IMR-90 (cell line): ENCODE measurements at regions of chr16 and their contacts with region 1.

Region 1: DNA sequence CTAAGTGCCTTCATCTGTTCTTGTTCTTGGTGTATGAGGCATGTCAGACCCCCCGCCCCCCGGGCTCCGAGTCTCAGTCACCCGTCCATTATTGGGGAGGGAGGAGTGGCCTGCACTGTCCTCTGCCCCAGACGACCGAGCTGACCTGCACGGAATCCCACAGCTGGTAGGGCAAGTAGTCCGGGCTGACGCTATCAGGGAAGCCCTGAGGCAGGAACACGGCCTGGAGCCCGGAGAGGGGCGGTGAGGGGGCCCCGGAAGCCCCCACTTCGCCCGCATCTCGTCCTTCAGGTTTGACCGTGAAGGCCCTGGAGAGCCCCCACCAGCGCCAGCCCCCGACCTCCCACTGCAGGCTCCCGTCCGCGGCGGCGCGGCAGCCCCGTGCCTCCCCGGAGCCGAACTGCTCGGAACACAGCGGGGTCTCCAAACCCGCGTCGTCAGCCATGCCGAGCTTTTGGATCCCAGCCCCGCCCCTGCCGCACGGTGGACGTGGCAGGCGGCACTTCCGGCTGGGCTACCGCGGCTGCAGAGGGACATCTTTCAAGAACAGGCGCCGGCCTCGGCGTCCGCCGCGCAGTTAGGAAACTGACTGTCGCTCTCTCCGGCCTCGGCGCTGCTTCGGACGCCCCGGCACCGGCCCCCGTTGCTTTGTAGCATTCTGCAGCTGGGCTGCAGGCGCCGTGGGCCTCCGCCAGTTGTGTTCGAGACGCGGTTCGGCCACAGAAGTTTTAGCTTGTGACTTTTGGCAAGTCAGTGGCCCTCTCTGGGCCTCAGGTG is at the start of gene RUSF1:
- DNase-seq: peak; percentile 87
- ATAC-seq: peak; percentile 93
- H3K4me3 ChIP-seq: peak within 1 kb of the TSS; percentile 94
- H3K27ac ChIP-seq: peak within 1 kb of the TSS; percentile 99
- H3K4me1 ChIP-seq: peaks cover 5% of the 10 kb centered on the region
- H3K27me3 ChIP-seq: no peaks in the 10 kb centered on the region
- CTCF ChIP-seq: no peak
- POLR2A ChIP-seq: peak; percentile 94
- RAD21 ChIP-seq: no peak
- total RNA-seq, gene RUSF1: 22.2 and 22.9 TPM in 2 replicates

Region 2: GRCh38 chr16:30458561-30459394 is 1049.3 kb before region 1 on chr16:
- CTCF ChIA-PET with region 1: no interaction called
- POLR2A ChIA-PET with region 1: no interaction called
- dilution Hi-C with region 1: no loop called
- in situ Hi-C with region 1: no loop called
- intact Hi-C with region 1: no loop called
- DNase-seq: no peak
- ATAC-seq: no peak
- H3K4me3 ChIP-seq: no peak overlapping the region
- H3K27ac ChIP-seq: no peak overlapping the region
- H3K4me1 ChIP-seq: no peaks in the 10 kb centered on the region
- H3K27me3 ChIP-seq: peaks cover 24% of the 10 kb centered on the region
- CTCF ChIP-seq: no peak
- POLR2A ChIP-seq: no peak
- RAD21 ChIP-seq: no peak

Region 3: DNA sequence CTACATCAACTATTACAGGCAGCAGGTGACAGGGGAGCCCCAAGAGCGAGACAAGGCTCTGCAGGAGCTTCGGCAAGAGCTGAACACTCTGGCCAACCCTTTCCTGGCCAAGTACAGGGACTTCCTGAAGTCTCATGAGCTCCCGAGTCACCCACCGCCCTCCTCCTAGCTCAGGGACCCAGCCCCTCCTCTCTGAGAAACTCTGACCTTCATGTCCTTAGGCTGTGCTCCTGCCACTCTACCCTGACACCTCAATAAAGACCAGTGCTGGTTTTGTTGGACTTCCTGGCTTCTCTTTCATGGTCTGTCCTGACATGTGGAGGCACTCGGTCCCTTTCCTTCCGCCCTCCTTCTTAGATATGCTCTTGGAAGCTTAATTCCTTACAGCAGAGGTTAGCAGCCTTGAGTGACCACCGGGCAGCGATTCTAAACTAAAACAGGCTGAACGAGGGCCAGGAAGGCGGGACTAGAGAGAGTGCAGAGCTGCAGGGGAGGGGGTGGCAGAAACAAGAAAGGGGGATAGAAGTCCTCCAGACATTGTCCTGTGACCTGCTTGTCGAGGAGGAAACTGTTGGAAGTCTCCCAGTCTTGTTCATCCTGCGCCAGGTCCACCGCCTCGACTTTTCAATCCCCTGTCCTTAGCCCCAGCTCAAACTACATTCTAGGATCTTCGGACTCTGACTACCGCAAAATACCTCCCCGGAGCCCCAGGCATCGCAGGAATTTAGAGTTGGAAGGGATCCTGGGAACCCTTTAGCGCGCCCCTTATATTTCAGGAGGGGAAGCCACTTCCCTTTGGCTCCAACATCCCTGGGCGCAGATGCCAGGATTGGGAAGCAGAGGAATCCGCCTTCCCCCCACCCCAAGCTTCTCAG is 20.6 kb after region 1 on chr16:
- CTCF ChIA-PET with region 1: no interaction called
- POLR2A ChIA-PET with region 1: no interaction called
- dilution Hi-C with region 1: no loop called
- in situ Hi-C with region 1: no loop called
- intact Hi-C with region 1: loop called (anchors 2 kb)
- DNase-seq: peak; percentile 23
- ATAC-seq: peak; percentile 78
- H3K4me3 ChIP-seq: peak overlapping the region; percentile 39
- H3K27ac ChIP-seq: 0 out of 2 replicates have a peak overlapping the region, but pooled peaks have one; percentile 3
- H3K4me1 ChIP-seq: peaks cover 4% of the 10 kb centered on the region; the same call in 1 of the 2 replicates
- H3K27me3 ChIP-seq: peaks cover 25% of the 10 kb centered on the region
- CTCF ChIP-seq: no peak
- POLR2A ChIP-seq: no peak
- RAD21 ChIP-seq: no peak

Region 4: DNA sequence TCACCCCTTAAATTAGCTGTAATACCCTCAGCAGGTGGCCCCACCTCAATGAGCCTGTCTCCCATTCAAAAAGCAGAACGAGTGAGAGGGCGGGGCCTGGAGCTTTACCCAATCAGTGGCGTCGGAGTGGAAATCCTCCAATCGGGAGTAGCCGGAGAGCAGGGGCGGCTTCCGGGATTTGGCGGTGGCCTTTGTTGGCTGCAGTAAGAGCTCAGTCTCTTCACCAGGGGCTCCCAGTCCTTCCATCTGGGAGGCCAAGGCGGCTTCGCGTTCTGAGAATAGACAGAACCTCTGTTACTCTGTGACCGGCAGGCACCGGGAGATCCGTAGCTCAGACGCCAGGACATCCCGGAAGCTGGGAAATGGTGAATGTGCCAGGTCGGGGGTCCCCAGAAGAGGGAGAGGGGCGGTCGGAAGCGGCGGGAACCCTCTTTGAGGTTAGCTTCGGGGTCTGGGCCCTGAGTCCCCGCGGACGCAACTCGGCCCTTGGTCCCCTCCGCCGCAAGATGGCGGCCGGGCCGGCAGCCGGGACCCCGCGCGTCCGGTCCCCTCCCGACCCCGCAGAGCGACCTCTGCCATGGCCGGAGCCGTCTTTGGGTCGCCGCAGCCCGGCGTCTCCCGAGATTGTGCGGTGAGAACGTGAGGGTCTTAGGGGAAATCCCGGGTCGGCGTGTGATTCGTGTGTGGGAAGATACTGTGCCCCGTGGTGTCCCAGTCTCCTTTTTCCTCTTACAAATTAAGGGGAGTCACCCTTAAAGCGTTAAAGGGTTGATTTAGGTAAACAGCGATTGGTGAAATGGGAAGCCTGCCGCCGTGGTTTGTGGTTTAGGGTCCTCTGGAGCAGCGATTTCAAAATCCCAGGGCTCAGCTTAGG is 205.2 kb after region 1 on chr16:
- CTCF ChIA-PET with region 1: no interaction called
- POLR2A ChIA-PET with region 1: no interaction called
- dilution Hi-C with region 1: no loop called
- in situ Hi-C with region 1: loop called (anchors 25 kb)
- intact Hi-C with region 1: no loop called
- DNase-seq: peak; percentile 91
- ATAC-seq: peak; percentile 96
- H3K4me3 ChIP-seq: peak overlapping the region; percentile 66
- H3K27ac ChIP-seq: peak overlapping the region; percentile 70
- H3K4me1 ChIP-seq: peaks cover 6% of the 10 kb centered on the region
- H3K27me3 ChIP-seq: no peaks in the 10 kb centered on the region
- CTCF ChIP-seq: no peak
- POLR2A ChIP-seq: peak; percentile 98
- RAD21 ChIP-seq: no peak

Region 5: DNA sequence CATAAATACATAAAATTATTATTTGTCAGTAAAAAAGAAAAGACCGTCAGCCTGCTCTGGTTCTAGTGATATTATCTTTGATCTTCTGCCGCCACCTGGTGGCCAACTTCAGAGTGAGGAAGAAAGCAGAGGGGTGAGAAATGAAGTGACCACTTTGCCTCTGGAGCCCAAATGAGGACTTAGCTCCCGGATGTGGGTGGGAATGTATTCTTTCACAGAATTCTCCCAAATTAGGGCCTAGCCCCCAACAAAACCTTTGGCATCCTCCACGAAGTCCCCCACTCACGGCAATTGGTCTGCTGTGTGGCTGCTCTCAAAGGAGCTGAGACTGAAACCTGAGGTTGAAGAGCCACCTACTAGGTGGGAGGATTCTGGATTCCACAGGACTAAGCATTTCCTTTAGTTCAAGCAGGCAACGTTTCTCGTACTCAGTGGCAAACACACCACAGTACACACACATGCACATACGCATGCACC is 360.6 kb after region 1 on chr16:
- CTCF ChIA-PET with region 1: no interaction called
- POLR2A ChIA-PET with region 1: interaction called, 10 read pairs
- dilution Hi-C with region 1: no loop called
- in situ Hi-C with region 1: no loop called
- intact Hi-C with region 1: loop called (anchors 2 kb)
- DNase-seq: peak; percentile 72
- ATAC-seq: peak; percentile 79
- H3K4me3 ChIP-seq: no peak overlapping the region
- H3K27ac ChIP-seq: no peak overlapping the region
- H3K4me1 ChIP-seq: peaks cover 6% of the 10 kb centered on the region
- H3K27me3 ChIP-seq: peaks cover 12% of the 10 kb centered on the region
- CTCF ChIP-seq: peak; percentile 76
- POLR2A ChIP-seq: no peak
- RAD21 ChIP-seq: peak; percentile 74

Region 6: DNA sequence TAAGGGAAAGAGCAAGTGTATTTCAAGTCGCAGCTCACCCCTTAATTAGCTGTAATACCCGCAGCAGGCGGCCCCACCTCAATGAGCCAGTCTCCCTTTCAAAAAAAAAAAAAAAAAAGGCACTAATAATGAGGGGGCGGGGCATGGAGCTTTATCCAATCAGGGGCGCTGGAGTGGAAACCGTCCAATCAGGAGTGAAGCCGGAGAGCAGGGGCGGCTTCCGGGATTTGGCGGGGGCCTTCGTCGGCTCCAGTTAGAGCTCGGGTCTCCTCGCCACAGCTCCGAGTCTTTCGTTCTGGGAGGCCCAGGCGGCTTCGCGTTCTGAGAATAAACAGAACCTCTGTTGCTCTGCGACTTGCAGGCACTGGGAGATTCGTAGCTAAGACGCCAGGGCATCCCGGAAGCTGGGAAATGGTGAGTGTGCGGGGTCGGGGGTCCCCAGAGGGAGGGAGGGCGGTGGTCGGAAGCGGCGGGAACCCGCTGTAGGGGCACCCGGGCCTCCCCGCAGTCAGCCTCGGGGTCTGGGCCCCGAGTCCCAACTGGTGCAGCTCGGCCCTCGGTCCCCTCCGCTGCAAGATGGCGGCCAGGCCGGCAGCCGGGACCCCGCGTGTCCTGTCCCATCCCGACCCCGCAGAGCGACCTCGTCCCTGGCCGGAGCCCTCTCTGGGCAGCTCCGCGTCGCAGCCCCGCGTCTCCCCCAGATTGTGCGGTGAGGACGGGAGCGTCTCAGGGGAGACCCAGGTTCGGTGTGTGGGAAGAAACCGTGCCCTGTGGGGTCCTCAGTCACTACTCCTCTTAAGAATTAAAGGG is 365.6 kb after region 1 on chr16 and contains the start of gene ZNF267:
- CTCF ChIA-PET with region 1: no interaction called
- POLR2A ChIA-PET with region 1: interaction called, 10 read pairs
- dilution Hi-C with region 1: no loop called
- in situ Hi-C with region 1: loop called (anchors 5 kb)
- intact Hi-C with region 1: loop called (anchors 2 kb)
- DNase-seq: peak; percentile 86
- ATAC-seq: peak; percentile 89
- H3K4me3 ChIP-seq: peak within 1 kb of the TSS; percentile 73
- H3K27ac ChIP-seq: peak within 1 kb of the TSS; percentile 58
- H3K4me1 ChIP-seq: peaks cover 20% of the 10 kb centered on the region
- H3K27me3 ChIP-seq: no peaks in the 10 kb centered on the region
- CTCF ChIP-seq: no peak
- POLR2A ChIP-seq: peak; percentile 95
- RAD21 ChIP-seq: no peak
- total RNA-seq, gene ZNF267: 15.6 and 22.2 TPM in 2 replicates